RWPE1 (cell line): ENCODE measurements at regions of chr1 and their contacts with region 1.

Region 1: DNA sequence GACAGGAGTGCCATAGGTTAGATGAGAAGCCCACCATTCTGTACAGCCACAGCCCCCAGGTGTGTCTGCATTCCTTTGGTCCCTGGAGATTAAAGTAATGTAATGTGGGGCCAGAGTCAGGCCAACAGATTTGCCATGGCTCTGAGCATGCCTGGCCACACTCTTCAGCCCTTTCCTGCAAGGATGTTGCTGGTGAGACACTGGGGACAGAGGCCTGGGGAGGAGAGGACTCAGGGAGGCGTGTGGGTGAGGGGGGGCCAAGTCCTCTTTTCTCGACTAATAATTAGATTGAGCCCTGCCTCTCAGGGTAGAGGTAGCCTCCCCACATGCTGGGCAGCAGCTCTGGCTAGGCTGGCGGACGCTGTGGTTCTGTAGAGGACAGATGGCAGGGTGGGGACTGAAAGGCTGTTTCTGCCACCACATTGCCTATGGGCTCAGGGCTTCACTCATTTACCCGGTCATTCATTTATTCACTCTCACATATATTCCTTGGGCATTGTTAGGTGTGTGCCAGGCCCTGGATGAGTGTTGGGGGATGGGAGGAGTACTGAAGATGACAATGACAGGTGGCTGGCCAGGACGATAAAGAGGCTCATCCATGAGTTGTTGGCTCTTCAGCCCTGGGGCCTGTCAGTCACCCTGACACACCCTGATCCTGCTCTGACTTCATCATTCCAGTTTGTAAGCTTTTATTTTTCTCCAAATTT is 7.1 kb upstream of the PRCC start:
- DNase-seq: no peak
- H3K27ac ChIP-seq: 0 out of 2 replicates have a peak overlapping the region, but pooled peaks have one; percentile 9
- CTCF ChIP-seq: no peak

Region 2: DNA sequence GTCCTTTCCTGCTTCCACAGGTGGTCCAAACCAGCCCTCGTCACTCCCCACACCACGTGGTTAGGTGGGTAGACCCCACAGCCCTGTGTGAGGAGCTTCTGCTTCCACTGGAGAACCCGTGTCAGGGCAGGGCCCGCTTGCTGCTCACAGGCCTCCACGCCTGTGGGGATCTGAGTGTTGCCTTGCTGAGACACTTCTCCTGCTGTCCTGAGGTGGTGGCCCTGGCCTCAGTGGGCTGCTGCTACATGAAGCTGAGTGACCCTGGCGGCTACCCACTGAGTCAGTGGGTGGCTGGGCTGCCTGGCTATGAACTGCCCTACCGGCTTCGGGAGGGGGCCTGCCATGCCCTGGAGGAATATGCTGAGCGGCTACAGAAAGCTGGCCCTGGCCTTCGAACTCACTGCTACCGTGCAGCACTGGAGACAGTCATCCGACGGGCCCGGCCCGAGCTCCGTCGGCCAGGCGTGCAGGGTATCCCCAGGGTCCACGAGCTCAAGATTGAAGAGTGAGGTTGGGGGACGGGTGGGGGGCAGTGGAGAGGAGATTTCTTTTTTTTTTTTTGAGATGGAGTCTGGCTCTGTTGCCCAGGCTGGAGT is 26.2 kb before region 1 on chr1:
- CTCF ChIA-PET with region 1: interaction called, 10 read pairs
- POLR2A ChIA-PET with region 1: interaction called, 4 read pairs
- DNase-seq: no peak
- H3K27ac ChIP-seq: peak overlapping the region; percentile 37
- CTCF ChIP-seq: no peak